ENCODE measurements at regions of chr6 and their contacts with region 1.

Region 1: DNA sequence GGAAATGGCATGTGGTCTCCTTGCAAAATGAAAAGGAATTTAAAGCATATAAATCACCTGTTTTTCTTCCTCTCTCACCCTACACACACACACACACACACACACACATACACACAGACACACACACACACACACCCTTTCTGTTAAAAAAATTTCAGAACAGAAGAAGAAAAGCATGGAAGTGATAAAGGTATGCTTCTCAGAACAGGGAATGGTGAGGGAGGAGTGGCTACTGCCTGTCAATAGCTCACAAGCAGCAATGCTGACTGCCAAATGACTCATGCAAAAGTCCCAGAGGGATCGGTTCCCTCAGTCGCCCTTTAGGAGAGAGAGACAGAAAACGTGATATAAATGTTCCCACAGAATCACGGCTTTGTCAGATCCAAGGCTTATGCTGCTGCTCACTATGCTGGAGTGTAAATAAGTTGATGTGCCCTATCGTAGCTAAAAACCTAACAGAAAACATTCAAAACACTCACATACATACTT is 102.6 kb downstream of the IBTK start:
- DNase-seq: peak; percentile 85

Region 2: GRCh38 chr6:81049425-81050042 is 1095.4 kb before region 1 on chr6:
- intact Hi-C with region 1: loop called in 1 of 2 experiments (anchors 5 kb)
- DNase-seq: no peak

Region 3: DNA sequence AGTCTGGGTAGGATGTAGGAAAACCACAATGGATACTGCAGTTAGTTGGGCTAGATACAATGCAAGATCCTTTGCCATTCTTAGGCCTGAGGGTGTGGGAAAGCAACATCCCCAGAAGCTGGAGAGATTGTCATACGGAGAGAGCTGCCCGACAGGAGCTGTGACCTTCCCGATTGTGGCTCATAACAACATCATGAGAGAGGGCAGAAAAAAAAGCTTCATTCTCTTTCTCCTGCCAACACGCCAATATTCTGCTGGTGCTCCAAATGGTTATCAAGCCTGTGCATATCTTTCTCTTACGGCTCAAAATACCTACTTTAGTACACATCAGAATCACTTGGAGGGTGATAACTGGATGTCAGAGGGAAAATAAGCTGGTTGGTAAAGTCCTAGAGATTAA is 21.6 kb after region 1 on chr6:
- intact Hi-C with region 1: no loop called
- DNase-seq: no peak

Region 4: DNA sequence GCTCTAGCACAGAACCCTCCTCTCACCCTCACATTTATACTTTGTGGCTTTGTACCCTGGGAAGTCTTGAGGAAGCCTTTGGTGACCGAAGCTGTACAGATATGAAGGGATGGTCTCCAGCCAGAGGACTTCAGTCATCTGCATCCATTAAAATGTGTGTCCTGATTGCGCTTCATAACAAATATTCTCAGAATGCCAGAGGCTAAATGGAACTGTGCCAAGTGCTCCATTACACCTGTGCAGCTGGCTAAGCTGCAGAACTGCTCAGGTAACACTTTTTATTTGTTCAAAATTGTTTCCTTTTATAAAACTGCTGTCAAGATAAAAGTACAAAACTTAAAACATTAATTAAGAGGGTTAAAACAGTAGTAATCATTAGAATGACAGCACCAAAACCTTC is 241.1 kb after region 1 on chr6:
- intact Hi-C with region 1: no loop called
- DNase-seq: no peak